WTC11 (cell line): ENCODE measurements at regions of chr16 and their contacts with region 1.

Region 1: DNA sequence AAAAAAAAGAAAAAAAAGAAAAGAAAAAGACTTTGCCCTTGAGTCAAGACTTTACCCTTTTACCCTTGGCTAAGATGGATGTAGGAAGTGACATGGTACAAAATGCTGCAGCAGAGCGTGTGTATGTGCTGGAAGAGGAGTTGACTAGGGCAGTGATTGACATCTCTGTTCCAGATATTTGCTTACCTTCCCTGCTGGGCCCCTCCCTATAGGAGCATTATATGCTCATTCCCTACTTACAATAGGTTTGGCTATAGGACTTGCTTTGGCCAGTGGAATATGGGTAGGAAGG is 10.8 kb downstream of the STX4 start:
- DNase-seq: no peak
- ATAC-seq: no peak
- H3K4me3 Mint-ChIP-seq: no peak overlapping the region
- H3K27ac Mint-ChIP-seq: no peak overlapping the region
- H3K4me1 Mint-ChIP-seq: peaks cover 5% of the 10 kb centered on the region; the same call in 1 of the 2 replicates
- H3K27me3 Mint-ChIP-seq: peaks cover 5% of the 10 kb centered on the region; the same call in 1 of the 2 replicates
- CTCF ChIP-seq: no peak

Region 2: DNA sequence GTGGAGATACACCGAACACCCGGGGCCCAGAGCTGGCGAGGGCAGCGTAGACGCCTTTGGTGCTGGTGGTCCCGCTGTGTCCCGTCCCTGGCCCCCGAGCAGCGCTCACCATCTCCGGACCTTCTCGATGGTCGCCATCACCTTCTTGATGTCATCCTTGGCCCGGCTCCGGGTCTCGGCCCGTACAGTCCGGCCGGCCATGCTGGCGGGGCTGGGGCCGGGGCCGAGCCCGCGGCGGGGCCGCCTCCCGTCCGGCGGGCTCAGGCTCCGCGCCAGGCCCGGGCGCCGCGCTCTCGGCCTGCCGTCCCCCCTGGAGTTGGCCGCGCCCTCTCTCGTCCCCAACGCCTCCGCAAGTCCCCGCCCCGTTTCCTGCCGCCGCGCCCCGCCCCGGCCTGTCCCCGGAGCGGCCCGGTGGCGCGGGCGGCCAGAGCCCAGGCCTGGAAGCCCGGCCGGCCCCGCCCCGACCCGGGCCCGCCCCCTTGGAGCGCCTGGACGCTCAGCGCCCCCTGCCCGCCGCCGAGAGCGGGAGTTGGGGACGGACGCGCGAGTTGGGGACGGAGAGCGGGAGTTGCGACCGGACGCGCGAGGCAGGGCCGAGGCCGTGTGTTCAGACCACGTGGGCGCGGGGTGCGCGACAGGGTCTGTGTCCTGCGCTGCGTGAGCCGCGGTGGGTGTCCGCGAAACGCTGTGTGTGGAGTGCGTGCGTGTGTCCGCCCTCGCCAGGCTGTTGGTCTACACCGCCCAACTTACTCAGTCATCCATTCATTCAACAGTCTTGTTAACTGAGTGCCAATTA is 150.2 kb before region 1 on chr16 and contains the start of gene BCL7C:
- CTCF ChIA-PET with region 1: no interaction called
- POLR2A ChIA-PET with region 1: no interaction called
- DNase-seq: peak; percentile 92
- ATAC-seq: peak; percentile 76
- H3K4me3 Mint-ChIP-seq: peak within 1 kb of the TSS; percentile 86
- H3K27ac Mint-ChIP-seq: no peak within 1 kb of the TSS; the same call in 1 of the 2 replicates
- H3K4me1 Mint-ChIP-seq: peaks cover 24% of the 10 kb centered on the region
- H3K27me3 Mint-ChIP-seq: peaks cover 25% of the 10 kb centered on the region
- CTCF ChIP-seq: no peak
- total RNA-seq, gene BCL7C: 18.3 to 20.3 TPM (median 18.7 TPM) in 3 replicates

Region 3: GRCh38 chr16:30953511-30954124 is 90.5 kb before region 1 on chr16:
- CTCF ChIA-PET with region 1: interaction called, 15 read pairs
- POLR2A ChIA-PET with region 1: no interaction called
- DNase-seq: peak; percentile 91
- ATAC-seq: peak; percentile 66
- H3K4me3 Mint-ChIP-seq: no peak overlapping the region
- H3K27ac Mint-ChIP-seq: no peak overlapping the region
- H3K4me1 Mint-ChIP-seq: peaks cover 19% of the 10 kb centered on the region
- H3K27me3 Mint-ChIP-seq: peaks cover 3% of the 10 kb centered on the region; the same call in 1 of the 2 replicates
- CTCF ChIP-seq: peak; percentile 64; the same call in 1 of the 2 replicates

Region 4: DNA sequence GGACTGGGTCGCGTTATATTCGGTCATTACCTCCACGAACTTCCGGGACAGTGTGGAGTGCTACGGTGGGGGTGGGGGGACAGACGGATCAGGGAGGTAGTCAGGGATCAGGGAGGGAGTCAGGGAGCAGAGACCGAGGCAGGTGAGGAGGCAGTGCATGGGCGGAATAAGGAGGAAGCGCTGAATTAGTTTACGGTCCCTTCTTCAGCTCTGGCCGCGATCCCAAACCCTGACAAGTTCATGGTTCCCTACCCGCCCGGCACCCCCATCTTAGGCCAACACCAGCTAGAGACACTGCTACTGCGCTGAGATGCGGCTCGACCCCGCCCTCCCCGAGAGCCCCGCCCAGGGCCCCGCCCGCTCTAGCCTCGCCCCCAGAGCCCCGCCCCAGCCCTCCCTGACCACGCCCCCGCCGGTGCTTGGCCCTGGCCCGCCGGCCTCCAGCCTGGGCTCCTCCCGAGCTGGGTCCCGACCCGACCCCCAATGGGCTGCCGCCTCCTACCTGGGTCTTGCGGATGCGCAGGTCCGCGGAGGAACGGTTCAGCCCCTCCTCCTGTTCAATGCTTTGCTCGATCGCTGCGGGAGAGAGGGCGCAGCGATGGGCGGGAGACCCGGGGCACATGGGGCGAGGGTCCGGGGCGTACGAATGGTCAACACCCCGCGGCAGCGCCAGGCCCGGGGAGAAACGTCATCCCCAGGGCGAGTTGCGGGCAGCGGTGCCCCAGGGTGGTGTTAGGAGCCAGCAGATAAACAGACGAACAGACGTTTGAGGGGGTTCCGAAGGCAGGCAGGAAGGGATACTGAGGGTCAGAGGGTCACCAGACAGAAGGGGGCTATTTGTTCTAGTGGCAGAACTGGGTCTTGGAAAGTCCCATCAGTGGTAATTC is 46.9 kb before region 1 on chr16:
- CTCF ChIA-PET with region 1: interaction called, 14 read pairs
- POLR2A ChIA-PET with region 1: interaction called, 5 read pairs
- DNase-seq: peak; percentile 87
- ATAC-seq: peak; percentile 89
- H3K4me3 Mint-ChIP-seq: peak overlapping the region; percentile 70
- H3K27ac Mint-ChIP-seq: no peak overlapping the region; the same call in 1 of the 2 replicates
- H3K4me1 Mint-ChIP-seq: peaks cover 16% of the 10 kb centered on the region
- H3K27me3 Mint-ChIP-seq: peaks cover 7% of the 10 kb centered on the region; the same call in 1 of the 2 replicates
- CTCF ChIP-seq: no peak

Region 5: DNA sequence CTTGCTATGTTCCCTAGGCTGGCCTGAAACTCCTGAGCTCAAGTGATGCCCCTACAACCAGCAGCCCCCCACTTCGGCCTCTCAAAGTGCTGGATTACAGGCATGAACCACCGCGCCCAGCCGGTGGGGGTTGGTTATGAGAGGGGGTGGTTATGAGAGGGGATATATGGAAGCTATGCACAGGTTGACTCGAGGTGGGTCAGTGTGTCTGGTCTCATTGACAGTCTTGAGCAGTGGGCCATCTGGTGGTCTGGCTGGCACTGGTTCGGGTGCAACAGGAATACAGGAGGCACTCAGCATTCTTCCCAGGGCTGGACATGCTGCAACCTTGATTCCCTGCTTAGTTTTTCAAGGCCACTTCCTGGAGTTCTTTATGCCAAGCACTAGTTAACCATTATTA is 28.1 kb before region 1 on chr16:
- CTCF ChIA-PET with region 1: interaction called, 16 read pairs
- POLR2A ChIA-PET with region 1: no interaction called
- DNase-seq: no peak
- ATAC-seq: peak; percentile 78
- H3K4me3 Mint-ChIP-seq: no peak overlapping the region
- H3K27ac Mint-ChIP-seq: no peak overlapping the region
- H3K4me1 Mint-ChIP-seq: peaks cover 5% of the 10 kb centered on the region
- H3K27me3 Mint-ChIP-seq: peaks cover 34% of the 10 kb centered on the region
- CTCF ChIP-seq: no peak

Region 6: DNA sequence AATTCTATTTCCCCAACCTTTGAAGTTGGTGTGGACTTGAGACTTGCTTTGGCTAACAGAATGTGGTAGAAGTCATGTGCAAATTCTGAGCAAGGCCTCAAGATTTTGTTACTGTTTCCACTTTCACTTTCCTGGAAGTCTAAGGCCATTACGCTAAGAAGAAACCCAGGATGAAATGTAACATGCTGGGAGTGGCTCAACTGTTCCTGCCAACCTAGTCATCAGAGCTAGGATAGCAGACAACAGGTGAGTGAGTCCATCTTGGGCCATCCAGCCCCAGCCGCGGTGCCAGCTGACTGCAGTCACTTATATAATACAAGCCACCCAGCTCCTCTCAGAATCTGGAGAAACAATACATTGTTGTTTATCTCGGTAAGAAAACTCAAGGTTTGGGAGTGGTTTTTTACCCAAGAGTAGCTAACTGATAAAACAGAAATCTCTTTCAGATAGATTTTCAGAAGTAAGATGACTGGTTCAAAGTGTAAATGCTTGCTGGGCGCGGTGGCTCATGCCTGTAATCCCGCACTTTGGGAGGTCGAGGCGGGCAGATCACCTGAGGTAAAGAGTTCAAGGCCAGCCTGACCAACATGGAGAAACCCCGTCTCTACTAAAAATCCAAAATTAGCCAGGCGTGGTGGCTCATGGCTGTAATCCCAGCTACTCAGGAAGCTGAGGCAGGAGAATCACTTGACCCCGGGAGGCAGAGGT is 21.4 kb before region 1 on chr16:
- CTCF ChIA-PET with region 1: interaction called, 11 read pairs
- POLR2A ChIA-PET with region 1: no interaction called
- DNase-seq: no peak
- ATAC-seq: no peak
- H3K4me3 Mint-ChIP-seq: no peak overlapping the region
- H3K27ac Mint-ChIP-seq: no peak overlapping the region; the same call in 1 of the 2 replicates
- H3K4me1 Mint-ChIP-seq: peaks cover 4% of the 10 kb centered on the region; the same call in 1 of the 2 replicates
- H3K27me3 Mint-ChIP-seq: no peaks in the 10 kb centered on the region
- CTCF ChIP-seq: no peak

Region 7: GRCh38 chr16:31032736-31033708 is 11.1 kb before region 1 on chr16 and contains the start of gene STX4:
- CTCF ChIA-PET with region 1: interaction called, 14 read pairs
- POLR2A ChIA-PET with region 1: interaction called, 3 read pairs
- DNase-seq: peak; percentile 96
- ATAC-seq: peak; percentile 86
- H3K4me3 Mint-ChIP-seq: peak within 1 kb of the TSS; percentile 90
- H3K27ac Mint-ChIP-seq: peak within 1 kb of the TSS; percentile 70
- H3K4me1 Mint-ChIP-seq: no peaks in the 10 kb centered on the region
- H3K27me3 Mint-ChIP-seq: no peaks in the 10 kb centered on the region; the same call in 1 of the 2 replicates
- CTCF ChIP-seq: no peak
- total RNA-seq, gene STX4: 31.3 to 38.4 TPM (median 32.5 TPM) in 3 replicates

Region 8: GRCh38 chr16:31073968-31074813 is 30.1 kb after region 1 on chr16 and contains the starts of genes ZNF646 and ZNF668:
- CTCF ChIA-PET with region 1: interaction called, 16 read pairs
- POLR2A ChIA-PET with region 1: interaction called, 9 read pairs
- DNase-seq: peak; percentile 97
- ATAC-seq: peak; percentile 86
- H3K4me3 Mint-ChIP-seq: peak within 1 kb of the TSS; percentile 99
- H3K27ac Mint-ChIP-seq: peak within 1 kb of the TSS; percentile 95
- H3K4me1 Mint-ChIP-seq: peaks cover 19% of the 10 kb centered on the region
- H3K27me3 Mint-ChIP-seq: no peaks in the 10 kb centered on the region
- CTCF ChIP-seq: no peak
- total RNA-seq, gene ZNF646: 26.7 to 29.3 TPM (median 29.1 TPM) in 3 replicates
- total RNA-seq, gene ZNF668: 13.5 to 17.3 TPM (median 16.6 TPM) in 3 replicates